CD8-positive, alpha-beta memory T cell (primary cell): ENCODE measurements at regions of chr5 and their contacts with region 1.

Region 1: DNA sequence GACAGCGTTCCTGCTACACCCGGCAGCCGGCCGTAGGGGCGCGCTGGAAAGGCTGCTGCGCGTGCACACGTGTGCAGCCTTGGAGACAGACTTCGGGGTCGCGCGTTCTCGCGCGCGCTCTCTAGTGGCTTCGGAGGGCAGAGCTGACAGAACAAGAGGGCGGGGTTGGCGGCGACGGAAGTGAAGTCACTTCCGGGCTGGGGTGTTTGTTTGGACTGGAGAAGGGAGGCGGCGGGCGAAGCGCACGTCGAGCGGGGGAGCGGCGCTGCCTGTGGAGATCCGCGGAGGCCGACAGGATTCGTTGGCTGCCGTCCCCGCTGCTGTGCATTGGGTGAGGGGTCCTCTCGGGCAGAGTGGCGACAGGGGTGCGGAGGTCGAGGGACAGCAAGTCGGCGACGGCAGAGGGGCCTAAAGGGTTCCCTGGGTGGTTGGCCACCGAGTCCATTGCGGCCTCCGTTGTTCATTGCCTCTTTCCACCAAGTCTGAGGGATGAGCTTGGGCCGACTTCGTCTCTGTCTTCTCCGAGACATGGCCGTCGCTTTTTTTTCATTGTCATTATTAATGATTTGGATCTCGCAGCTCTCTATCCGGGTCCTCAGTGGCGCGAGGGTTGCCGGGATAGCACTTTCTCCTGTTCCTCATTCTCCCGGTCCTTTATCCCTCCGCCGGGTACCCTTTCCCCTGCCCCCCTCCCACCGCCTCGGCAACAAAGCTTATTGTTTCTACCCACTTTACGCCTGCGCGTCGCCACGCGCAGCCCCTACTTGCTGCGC is at the start of gene PAIP2:
- DNase-seq: peak; percentile 96 to 98 (median 97)
- H3K4me3 ChIP-seq: peak within 1 kb of the TSS; percentile 87
- H3K4me3 Mint-ChIP-seq: peak within 1 kb of the TSS; percentile 93 to 100 (median 97)
- H3K27ac ChIP-seq: peak within 1 kb of the TSS; percentile 99
- H3K27ac Mint-ChIP-seq: peak within 1 kb of the TSS; percentile 98 to 100 (median 98)
- H3K4me1 ChIP-seq: peaks cover 36% of the 10 kb centered on the region
- H3K4me1 Mint-ChIP-seq: peaks cover 43 to 61% (median 53%) of the 10 kb centered on the region in 3 donors
- H3K27me3 ChIP-seq: no peaks in the 10 kb centered on the region
- H3K27me3 Mint-ChIP-seq: no peaks in the 10 kb centered on the region
- total RNA-seq, gene PAIP2: 67.9 to 77.0 TPM

Region 2: DNA sequence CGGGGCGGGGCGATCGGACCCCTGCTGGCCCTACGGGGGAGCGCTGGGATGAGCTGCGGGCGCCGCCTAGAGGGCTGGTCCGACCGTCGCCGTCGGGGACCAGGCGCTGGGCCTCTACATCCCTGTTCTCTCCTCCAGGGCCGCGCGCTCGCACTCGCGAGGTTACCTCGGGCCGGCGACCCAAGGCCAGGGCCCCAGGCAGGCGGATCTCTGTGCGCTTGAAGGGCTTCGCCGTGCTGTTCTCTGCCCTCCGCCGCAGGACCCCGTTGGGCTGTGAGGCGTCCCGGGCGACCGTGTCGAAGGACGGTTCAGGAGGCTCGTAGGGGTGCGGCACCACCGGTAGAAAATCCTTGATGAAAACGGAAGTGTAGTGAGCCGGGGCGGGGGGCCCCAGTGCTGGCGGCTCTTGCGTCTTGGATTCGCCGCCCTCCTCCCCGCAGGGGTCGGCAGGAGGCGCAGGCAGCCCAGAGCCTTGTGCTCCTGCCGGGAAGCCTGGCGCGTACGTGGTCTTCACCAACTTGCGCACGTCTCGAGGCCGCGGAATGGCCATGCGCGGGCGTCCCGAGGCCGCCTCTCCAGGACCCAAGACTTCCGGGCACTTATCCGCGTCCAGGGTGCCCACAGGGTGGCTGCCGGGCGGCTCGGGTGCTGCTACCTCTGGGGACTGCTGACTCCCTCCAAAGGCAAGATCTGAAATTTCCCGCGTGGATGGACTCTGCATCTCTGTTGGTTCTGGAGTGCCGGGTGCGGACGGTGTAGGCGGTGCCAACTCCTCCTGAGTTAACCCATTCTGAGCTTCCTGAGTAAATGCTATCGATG is 51.1 kb after region 1 on chr5:
- CTCF ChIA-PET with region 1: interaction called, 21 read pairs
- POLR2A ChIA-PET with region 1: interaction called, 20 read pairs
- DNase-seq: peak; percentile 63 to 84 (median 75)
- H3K4me3 ChIP-seq: peak overlapping the region; percentile 59
- H3K4me3 Mint-ChIP-seq: peak overlapping the region; percentile 87 to 95 (median 89)
- H3K27ac ChIP-seq: peak overlapping the region; percentile 24
- H3K27ac Mint-ChIP-seq: peak overlapping the region; percentile 61 to 92 (median 83)
- H3K4me1 ChIP-seq: peaks cover 41% of the 10 kb centered on the region
- H3K4me1 Mint-ChIP-seq: peaks cover 27 to 59% (median 37%) of the 10 kb centered on the region in 3 donors
- H3K27me3 ChIP-seq: no peaks in the 10 kb centered on the region
- H3K27me3 Mint-ChIP-seq: peaks cover 0 to 5% of the 10 kb centered on the region in 2 donors